GM12878 (cell line): ENCODE measurements at regions of chr6 and their contacts with region 1.

Region 1: GRCh38 chr6:25027221-25027916 is 91.6 kb upstream of the RIPOR2 start:
- DNase-seq: peak; percentile 60
- ATAC-seq: peak; percentile 98
- H3K4me3 ChIP-seq: 0 out of 2 replicates have a peak overlapping the region, but pooled peaks have one; percentile 34
- H3K27ac ChIP-seq: no peak overlapping the region
- H3K4me1 ChIP-seq: peaks cover 7% of the 10 kb centered on the region
- H3K27me3 ChIP-seq: no peaks in the 10 kb centered on the region
- CTCF ChIP-seq: peak; percentile 71 to 82 (median 71)
- EP300 ChIP-seq: no peak
- POLR2A ChIP-seq: no peak
- RAD21 ChIP-seq: peak; percentile 86

Region 2: GRCh38 chr6:23747239-23747638 is 1280.1 kb before region 1 on chr6:
- CTCF ChIA-PET with region 1: no interaction called
- POLR2A ChIA-PET with region 1: no interaction called
- RAD21 ChIA-PET with region 1: no interaction called
- SMC1A ChIA-PET with region 1: no interaction called
- in situ Hi-C with region 1: no loop called
- intact Hi-C with region 1: no loop called
- DNase-seq: no peak
- ATAC-seq: no peak
- H3K4me3 ChIP-seq: no peak overlapping the region
- H3K27ac ChIP-seq: no peak overlapping the region
- H3K4me1 ChIP-seq: no peaks in the 10 kb centered on the region
- H3K27me3 ChIP-seq: no peaks in the 10 kb centered on the region
- CTCF ChIP-seq: no peak
- EP300 ChIP-seq: no peak
- POLR2A ChIP-seq: no peak
- RAD21 ChIP-seq: no peak

Region 3: DNA sequence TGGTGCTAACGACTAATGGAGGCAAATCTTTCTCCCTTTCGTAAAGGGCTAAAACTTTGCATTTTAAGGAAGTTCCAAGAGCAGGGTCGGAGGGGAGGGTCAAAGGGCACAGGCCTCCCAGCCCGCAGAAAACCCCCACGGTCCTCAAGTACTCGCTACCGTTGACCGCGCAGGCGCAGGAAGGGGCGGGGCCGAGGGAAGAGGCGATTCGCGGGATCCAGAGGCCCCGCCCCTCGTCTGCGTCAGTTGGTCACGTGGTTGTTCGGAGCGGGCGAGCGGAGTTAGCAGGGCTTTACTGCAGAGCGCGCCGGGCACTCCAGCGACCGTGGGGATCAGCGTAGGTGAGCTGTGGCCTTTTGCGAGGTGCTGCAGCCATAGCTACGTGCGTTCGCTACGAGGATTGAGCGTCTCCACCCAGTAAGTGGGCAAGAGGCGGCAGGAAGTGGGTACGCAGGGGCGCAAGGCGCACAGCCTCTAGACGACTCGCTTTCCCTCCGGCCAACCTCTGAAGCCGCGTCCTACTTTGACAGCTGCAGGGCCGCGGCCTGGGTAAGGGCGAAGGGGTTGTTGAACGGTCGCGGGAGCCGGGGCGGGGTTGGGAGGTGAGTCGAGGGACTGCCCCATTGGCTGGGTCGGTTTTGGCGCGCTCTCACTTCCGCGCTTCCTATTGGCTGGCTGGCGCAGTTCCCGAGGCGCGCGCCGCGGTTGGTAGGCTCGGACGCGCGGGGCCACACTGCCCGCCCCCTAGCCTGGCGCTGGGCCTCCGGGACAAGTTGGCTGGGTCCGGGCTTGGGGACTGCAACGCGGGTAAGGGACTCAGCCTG is 252.5 kb before region 1 on chr6 and contains the start of gene GMNN:
- CTCF ChIA-PET with region 1: interaction called, 9 read pairs
- POLR2A ChIA-PET with region 1: no interaction called
- RAD21 ChIA-PET with region 1: interaction called, 3 read pairs
- SMC1A ChIA-PET with region 1: interaction called, 19 read pairs
- in situ Hi-C with region 1: no loop called
- intact Hi-C with region 1: no loop called
- DNase-seq: peak; percentile 78
- ATAC-seq: peak; percentile 94
- H3K4me3 ChIP-seq: peak within 1 kb of the TSS; percentile 79
- H3K27ac ChIP-seq: peak within 1 kb of the TSS; percentile 87
- H3K4me1 ChIP-seq: peaks cover 3% of the 10 kb centered on the region; the same call in 1 of the 2 replicates
- H3K27me3 ChIP-seq: no peaks in the 10 kb centered on the region
- CTCF ChIP-seq: no peak
- EP300 ChIP-seq: no peak
- POLR2A ChIP-seq: peak; percentile 96
- RAD21 ChIP-seq: no peak
- polyA plus RNA-seq, gene GMNN: 146 to 153 TPM

Region 4: GRCh38 chr6:24910961-24911712 is 116.2 kb before region 1 on chr6:
- CTCF ChIA-PET with region 1: interaction called, 20 read pairs
- POLR2A ChIA-PET with region 1: interaction called, 3 read pairs
- RAD21 ChIA-PET with region 1: interaction called, 5 read pairs
- SMC1A ChIA-PET with region 1: interaction called, 10 read pairs
- in situ Hi-C with region 1: no loop called
- intact Hi-C with region 1: no loop called
- DNase-seq: no peak
- ATAC-seq: peak; percentile 47
- H3K4me3 ChIP-seq: peak overlapping the region; percentile 86
- H3K27ac ChIP-seq: peak overlapping the region; percentile 60
- H3K4me1 ChIP-seq: peaks cover 26% of the 10 kb centered on the region
- H3K27me3 ChIP-seq: no peaks in the 10 kb centered on the region
- CTCF ChIP-seq: no peak
- EP300 ChIP-seq: no peak
- POLR2A ChIP-seq: no peak; the same call in 1 of the 2 replicates
- RAD21 ChIP-seq: no peak

Region 5: DNA sequence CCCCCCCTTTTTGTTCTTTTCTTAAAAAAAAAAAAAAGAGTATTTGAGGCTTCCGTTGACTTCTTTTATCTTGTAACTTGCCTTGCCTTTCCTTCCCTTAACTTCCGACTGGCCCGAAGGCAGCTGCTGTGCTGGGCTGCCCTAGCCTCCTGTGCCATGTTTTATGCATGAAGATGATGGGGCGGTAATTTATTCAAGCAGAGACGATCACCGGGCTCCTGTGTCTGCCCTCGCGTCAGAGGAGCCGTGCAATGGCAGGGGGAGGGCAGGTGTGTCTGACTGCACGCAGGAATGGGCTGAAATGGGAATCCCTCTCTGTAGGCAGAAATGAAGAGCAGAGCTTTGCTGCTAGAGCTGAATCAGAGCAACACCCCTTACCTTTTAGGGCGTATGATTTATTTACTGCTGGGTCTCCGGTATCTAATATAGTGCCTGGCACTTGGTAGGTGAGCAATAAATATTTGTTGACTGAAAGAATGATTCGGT is 14.7 kb after region 1 on chr6:
- CTCF ChIA-PET with region 1: interaction called, 86 read pairs
- POLR2A ChIA-PET with region 1: interaction called, 32 read pairs
- RAD21 ChIA-PET with region 1: interaction called, 70 read pairs
- SMC1A ChIA-PET with region 1: interaction called, 304 read pairs
- in situ Hi-C with region 1: no loop called
- intact Hi-C with region 1: no loop called
- DNase-seq: no peak
- ATAC-seq: peak; percentile 62
- H3K4me3 ChIP-seq: peak overlapping the region; percentile 67
- H3K27ac ChIP-seq: peak overlapping the region; percentile 60
- H3K4me1 ChIP-seq: peaks cover 23% of the 10 kb centered on the region
- H3K27me3 ChIP-seq: no peaks in the 10 kb centered on the region
- CTCF ChIP-seq: no peak
- EP300 ChIP-seq: no peak
- POLR2A ChIP-seq: peak; percentile 50; the same call in 1 of the 2 replicates
- RAD21 ChIP-seq: no peak

Region 6: DNA sequence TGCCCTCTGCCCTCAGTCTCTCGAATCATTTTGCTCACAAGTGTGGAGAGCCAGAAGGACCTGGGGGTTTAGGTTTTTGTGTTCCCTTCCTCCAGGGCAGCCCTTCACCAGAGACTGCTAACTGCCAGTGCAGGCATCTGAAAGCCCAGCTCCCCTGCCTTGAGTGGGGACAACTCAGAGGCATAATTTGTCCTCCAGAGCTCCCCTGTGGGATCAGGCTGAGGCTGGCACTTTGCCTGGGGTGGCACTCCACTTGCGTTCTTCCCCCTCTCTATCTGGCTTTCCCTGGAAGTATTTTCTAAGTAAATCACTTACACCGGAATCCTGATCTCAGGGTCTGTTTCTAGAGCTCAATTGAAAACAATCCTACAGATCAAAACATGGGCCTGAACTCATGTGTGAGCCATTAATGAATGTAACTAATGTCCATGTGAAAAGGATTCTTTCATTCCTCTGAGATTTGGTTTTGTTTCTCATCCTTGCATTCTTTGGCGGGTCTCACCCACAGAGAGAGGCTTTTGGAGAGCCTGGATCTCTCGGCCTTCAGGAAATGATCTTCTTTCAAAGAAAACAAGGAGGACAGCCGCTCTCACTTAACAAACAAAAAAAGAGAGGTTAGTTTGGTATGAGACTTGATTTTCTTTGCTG is 34.0 kb after region 1 on chr6:
- CTCF ChIA-PET with region 1: interaction called, 204 read pairs
- POLR2A ChIA-PET with region 1: interaction called, 15 read pairs
- RAD21 ChIA-PET with region 1: interaction called, 52 read pairs
- SMC1A ChIA-PET with region 1: interaction called, 304 read pairs
- in situ Hi-C with region 1: no loop called
- intact Hi-C with region 1: no loop called
- DNase-seq: no peak
- ATAC-seq: no peak
- H3K4me3 ChIP-seq: no peak overlapping the region
- H3K27ac ChIP-seq: no peak overlapping the region
- H3K4me1 ChIP-seq: no peaks in the 10 kb centered on the region
- H3K27me3 ChIP-seq: no peaks in the 10 kb centered on the region
- CTCF ChIP-seq: no peak
- EP300 ChIP-seq: no peak
- POLR2A ChIP-seq: no peak
- RAD21 ChIP-seq: no peak

Region 7: DNA sequence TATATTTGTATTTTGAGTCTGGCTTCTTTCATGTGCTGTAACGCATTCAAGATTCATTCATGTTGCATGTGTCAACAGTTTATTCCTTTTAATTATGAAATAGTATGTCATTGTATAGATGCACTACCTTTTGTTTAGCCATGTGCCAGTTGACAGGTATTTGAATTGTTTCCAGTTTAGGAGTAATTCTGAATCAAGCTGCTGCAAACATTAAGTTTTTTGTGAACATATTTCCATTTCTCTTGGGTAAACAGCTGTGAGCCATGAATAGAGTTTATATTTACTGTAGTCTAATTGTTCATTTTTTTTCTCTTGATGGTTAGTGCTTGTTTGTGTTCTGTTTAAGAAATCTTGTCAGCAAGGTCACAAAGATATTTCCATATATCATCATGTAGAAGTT is 50.8 kb after region 1 on chr6:
- CTCF ChIA-PET with region 1: interaction called, 33 read pairs
- POLR2A ChIA-PET with region 1: interaction called, 3 read pairs
- RAD21 ChIA-PET with region 1: interaction called, 20 read pairs
- SMC1A ChIA-PET with region 1: interaction called, 23 read pairs
- in situ Hi-C with region 1: no loop called
- intact Hi-C with region 1: no loop called
- DNase-seq: no peak
- ATAC-seq: no peak
- H3K4me3 ChIP-seq: no peak overlapping the region
- H3K27ac ChIP-seq: no peak overlapping the region
- H3K4me1 ChIP-seq: no peaks in the 10 kb centered on the region
- H3K27me3 ChIP-seq: no peaks in the 10 kb centered on the region
- CTCF ChIP-seq: no peak
- EP300 ChIP-seq: no peak
- POLR2A ChIP-seq: no peak
- RAD21 ChIP-seq: no peak

Region 8: DNA sequence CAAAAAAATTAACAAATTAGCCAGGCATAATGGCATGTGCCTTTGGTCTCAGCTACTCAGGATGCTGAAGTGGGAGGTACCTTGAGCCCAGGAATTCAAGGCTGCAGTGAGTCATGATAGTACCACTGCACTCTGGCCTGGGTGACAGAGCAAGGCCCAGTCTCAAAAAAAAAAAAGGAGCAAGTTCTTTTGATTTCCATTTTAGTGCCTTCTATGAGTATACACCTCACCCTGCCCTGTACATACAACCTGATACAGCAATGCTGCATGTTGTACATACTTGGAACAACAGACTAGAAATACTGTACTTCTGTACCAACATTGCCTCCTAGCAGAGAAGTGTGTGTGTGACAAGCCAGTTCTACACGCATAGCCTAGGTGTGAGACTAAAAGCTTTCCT is 154.6 kb after region 1 on chr6:
- CTCF ChIA-PET with region 1: interaction called, 15 read pairs
- POLR2A ChIA-PET with region 1: interaction called, 3 read pairs
- RAD21 ChIA-PET with region 1: interaction called, 3 read pairs
- SMC1A ChIA-PET with region 1: interaction called, 10 read pairs
- in situ Hi-C with region 1: no loop called
- intact Hi-C with region 1: no loop called
- DNase-seq: no peak
- ATAC-seq: peak; percentile 51
- H3K4me3 ChIP-seq: no peak overlapping the region
- H3K27ac ChIP-seq: no peak overlapping the region
- H3K4me1 ChIP-seq: no peaks in the 10 kb centered on the region
- H3K27me3 ChIP-seq: peaks cover 0 to 2% of the 10 kb centered on the region in 2 experiments; a peak in 1 of 4 replicates
- CTCF ChIP-seq: 0 out of 6 replicates have a peak, but pooled peaks of 1 of the 3 experiments have one; percentile 6
- EP300 ChIP-seq: no peak
- POLR2A ChIP-seq: no peak
- RAD21 ChIP-seq: no peak

Region 9: GRCh38 chr6:25359191-25359861 is 332.0 kb after region 1 on chr6:
- CTCF ChIA-PET with region 1: no interaction called
- POLR2A ChIA-PET with region 1: no interaction called
- RAD21 ChIA-PET with region 1: no interaction called
- SMC1A ChIA-PET with region 1: no interaction called
- in situ Hi-C with region 1: no loop called
- intact Hi-C with region 1: no loop called
- DNase-seq: no peak
- ATAC-seq: no peak; the same call in 2 of the 3 replicates
- H3K4me3 ChIP-seq: no peak overlapping the region
- H3K27ac ChIP-seq: no peak overlapping the region
- H3K4me1 ChIP-seq: no peaks in the 10 kb centered on the region
- H3K27me3 ChIP-seq: no peaks in the 10 kb centered on the region
- CTCF ChIP-seq: no peak
- EP300 ChIP-seq: no peak
- POLR2A ChIP-seq: no peak
- RAD21 ChIP-seq: no peak

Region 10: GRCh38 chr6:25556516-25556915 is 529.1 kb after region 1 on chr6:
- CTCF ChIA-PET with region 1: no interaction called
- POLR2A ChIA-PET with region 1: no interaction called
- RAD21 ChIA-PET with region 1: no interaction called
- SMC1A ChIA-PET with region 1: no interaction called
- in situ Hi-C with region 1: no loop called
- intact Hi-C with region 1: no loop called
- DNase-seq: peak; percentile 28
- ATAC-seq: peak; percentile 90
- H3K4me3 ChIP-seq: no peak overlapping the region
- H3K27ac ChIP-seq: no peak overlapping the region
- H3K4me1 ChIP-seq: no peaks in the 10 kb centered on the region
- H3K27me3 ChIP-seq: no peaks in the 10 kb centered on the region
- CTCF ChIP-seq: peak; percentile 80 to 83 (median 81)
- EP300 ChIP-seq: no peak
- POLR2A ChIP-seq: no peak
- RAD21 ChIP-seq: peak; percentile 60

Region 11: DNA sequence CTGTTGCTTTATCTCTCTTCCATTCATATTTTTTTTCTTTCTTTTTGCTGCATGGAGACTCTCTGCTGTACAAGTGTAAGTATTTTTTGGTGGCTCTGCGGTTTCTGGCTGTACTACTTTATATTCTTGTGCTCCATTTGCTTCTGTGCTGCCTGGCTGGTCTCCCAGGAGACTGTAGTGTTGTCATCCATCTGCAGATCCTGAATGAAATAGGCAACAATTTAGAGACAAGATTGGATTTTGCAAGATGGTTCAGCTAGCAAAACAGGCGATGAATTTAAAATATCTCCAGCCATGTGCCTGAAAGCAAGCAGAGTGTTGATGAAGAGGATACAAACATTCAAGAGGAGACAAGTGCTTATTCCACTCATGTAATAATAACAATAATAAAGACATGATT is 549.5 kb after region 1 on chr6:
- CTCF ChIA-PET with region 1: no interaction called
- POLR2A ChIA-PET with region 1: no interaction called
- RAD21 ChIA-PET with region 1: no interaction called
- SMC1A ChIA-PET with region 1: no interaction called
- in situ Hi-C with region 1: no loop called
- intact Hi-C with region 1: no loop called
- DNase-seq: no peak
- ATAC-seq: no peak
- H3K4me3 ChIP-seq: no peak overlapping the region
- H3K27ac ChIP-seq: no peak overlapping the region
- H3K4me1 ChIP-seq: peaks cover 5% of the 10 kb centered on the region
- H3K27me3 ChIP-seq: no peaks in the 10 kb centered on the region
- CTCF ChIP-seq: no peak
- EP300 ChIP-seq: no peak
- POLR2A ChIP-seq: no peak
- RAD21 ChIP-seq: no peak